Endothelial cell of umbilical vein (primary cell): ENCODE measurements at regions of chr15 and their contacts with region 1.

Region 1: GRCh38 chr15:39887832-39888231 is 32.2 kb downstream of the GPR176 start:
- DNase-seq: peak; percentile 74
- H3K4me3 ChIP-seq: no peak overlapping the region
- H3K27ac ChIP-seq: no peak overlapping the region
- H3K4me1 ChIP-seq: peaks cover 9% of the 10 kb centered on the region
- H3K27me3 ChIP-seq: no peaks in the 10 kb centered on the region
- CTCF ChIP-seq: peak; percentile 19 to 44
- POLR2A ChIP-seq: no peak

Region 2: DNA sequence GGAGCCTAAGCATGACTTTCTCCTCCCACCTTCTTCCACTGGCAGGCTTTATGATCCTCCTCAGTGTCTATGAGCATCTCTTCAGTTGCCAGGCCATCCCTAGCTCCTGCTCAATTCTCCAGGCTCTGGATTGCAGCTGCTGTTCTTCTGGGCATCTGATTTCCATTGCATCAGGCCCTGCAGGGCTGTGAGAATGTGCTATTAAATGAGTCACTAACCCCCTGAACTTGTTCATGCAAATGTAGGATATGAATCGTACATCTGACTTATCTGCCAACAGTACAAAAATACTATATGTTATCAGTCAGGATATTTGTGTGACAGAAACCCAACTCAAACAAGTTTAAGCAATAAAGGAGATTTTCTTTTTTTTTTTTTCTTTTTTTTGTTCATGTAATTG is 20.4 kb after region 1 on chr15:
- CTCF ChIA-PET with region 1: interaction called, 16 read pairs
- POLR2A ChIA-PET with region 1: no interaction called
- dilution Hi-C with region 1: no loop called
- intact Hi-C with region 1: no loop called
- DNase-seq: peak; percentile 82
- H3K4me3 ChIP-seq: no peak overlapping the region
- H3K27ac ChIP-seq: peak overlapping the region; percentile 35
- H3K4me1 ChIP-seq: peaks cover 20% of the 10 kb centered on the region
- H3K27me3 ChIP-seq: no peaks in the 10 kb centered on the region
- CTCF ChIP-seq: no peak
- POLR2A ChIP-seq: no peak

Region 3: GRCh38 chr15:39920510-39921273 is 32.9 kb after region 1 on chr15:
- CTCF ChIA-PET with region 1: interaction called, 31 read pairs
- POLR2A ChIA-PET with region 1: interaction called, 6 read pairs
- dilution Hi-C with region 1: no loop called
- intact Hi-C with region 1: loop called (anchors 5 kb)
- DNase-seq: peak; percentile 83
- H3K4me3 ChIP-seq: peak overlapping the region; percentile 77 to 93 (median 79)
- H3K27ac ChIP-seq: peak overlapping the region; percentile 82
- H3K4me1 ChIP-seq: peaks cover 21% of the 10 kb centered on the region
- H3K27me3 ChIP-seq: no peaks in the 10 kb centered on the region
- CTCF ChIP-seq: peak in 1 of 2 donors; percentile 5
- POLR2A ChIP-seq: peak; percentile 73

Region 4: GRCh38 chr15:39942101-39942752 is 54.4 kb after region 1 on chr15:
- CTCF ChIA-PET with region 1: interaction called, 18 read pairs
- POLR2A ChIA-PET with region 1: no interaction called
- dilution Hi-C with region 1: no loop called
- intact Hi-C with region 1: no loop called
- DNase-seq: no peak
- H3K4me3 ChIP-seq: no peak overlapping the region
- H3K27ac ChIP-seq: no peak overlapping the region
- H3K4me1 ChIP-seq: peaks cover 9% of the 10 kb centered on the region
- H3K27me3 ChIP-seq: no peaks in the 10 kb centered on the region
- CTCF ChIP-seq: no peak
- POLR2A ChIP-seq: no peak

Region 5: DNA sequence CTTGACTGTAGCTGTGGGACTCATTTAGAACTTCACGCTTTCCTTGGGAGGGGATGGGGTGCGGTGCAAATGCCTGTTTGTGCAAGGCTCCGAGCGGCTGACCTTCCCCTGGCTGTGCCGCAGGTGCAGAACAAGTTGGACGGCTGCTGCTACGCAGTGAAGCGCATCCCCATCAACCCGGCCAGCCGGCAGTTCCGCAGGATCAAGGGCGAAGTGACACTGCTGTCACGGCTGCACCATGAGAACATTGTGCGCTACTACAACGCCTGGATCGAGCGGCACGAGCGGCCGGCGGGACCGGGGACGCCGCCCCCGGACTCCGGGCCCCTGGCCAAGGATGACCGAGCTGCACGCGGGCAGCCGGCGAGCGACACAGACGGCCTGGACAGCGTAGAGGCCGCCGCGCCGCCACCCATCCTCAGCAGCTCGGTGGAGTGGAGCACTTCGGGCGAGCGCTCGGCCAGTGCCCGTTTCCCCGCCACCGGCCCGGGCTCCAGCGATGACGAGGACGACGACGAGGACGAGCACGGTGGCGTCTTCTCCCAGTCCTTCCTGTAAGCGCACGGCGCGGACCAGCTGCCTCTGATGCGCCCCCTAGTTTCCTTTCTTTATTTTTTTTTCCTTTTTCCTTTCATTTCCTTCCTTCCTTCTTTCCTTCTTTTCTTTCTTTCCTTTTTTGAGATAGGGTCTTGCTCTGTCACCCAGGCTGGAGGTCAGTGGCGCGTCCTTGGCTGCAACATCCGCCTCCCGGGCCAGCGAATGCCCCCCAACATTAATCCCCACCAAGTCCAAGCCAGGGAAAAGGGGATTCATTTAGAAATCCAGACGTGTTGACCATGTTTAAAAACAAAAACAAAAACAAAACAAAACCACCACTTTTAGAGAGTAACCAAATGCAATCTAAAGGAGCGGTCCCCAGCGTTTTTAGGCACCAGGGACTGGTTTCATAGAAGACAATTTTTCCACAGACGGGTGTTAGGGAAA is 88.8 kb after region 1 on chr15:
- CTCF ChIA-PET with region 1: interaction called, 22 read pairs
- POLR2A ChIA-PET with region 1: no interaction called
- dilution Hi-C with region 1: no loop called
- intact Hi-C with region 1: loop called (anchors 10 kb)
- DNase-seq: peak; percentile 70
- H3K4me3 ChIP-seq: peak overlapping the region; percentile 2 to 56 (median 37)
- H3K27ac ChIP-seq: peak overlapping the region; percentile 28
- H3K4me1 ChIP-seq: peaks cover 4% of the 10 kb centered on the region
- H3K27me3 ChIP-seq: no peaks in the 10 kb centered on the region
- CTCF ChIP-seq: peak; percentile 30 to 40
- POLR2A ChIP-seq: no peak